ENCODE measurements at regions of chr11 and their contacts with region 1.

Region 1: GRCh38 chr11:47004595-47005033 is 68.1 kb downstream of the CSTPP1 start:
- DNase-seq: peak; percentile 97
- H3K4me3 ChIP-seq: no peak overlapping the region
- H3K27ac ChIP-seq: peak overlapping the region; percentile 64 to 84 (median 78)
- H3K4me1 ChIP-seq: peaks cover 0 to 69% (median 44%) of the 10 kb centered on the region in 4 donors
- H3K27me3 ChIP-seq: no peaks in the 10 kb centered on the region
- CTCF ChIP-seq: no peak
- EP300 ChIP-seq: peak; percentile 50 to 95 (median 92)
- POLR2A ChIP-seq: no peak

Region 2: GRCh38 chr11:46649180-46649738 is 355.4 kb before region 1 on chr11:
- intact Hi-C with region 1: no loop called
- DNase-seq: peak; percentile 88
- H3K4me3 ChIP-seq: no peak overlapping the region
- H3K27ac ChIP-seq: peak overlapping the region; percentile 53 to 75 (median 55)
- H3K4me1 ChIP-seq: peaks cover 0 to 13% (median 3%) of the 10 kb centered on the region in 4 donors
- H3K27me3 ChIP-seq: no peaks in the 10 kb centered on the region
- CTCF ChIP-seq: no peak
- EP300 ChIP-seq: no peak
- POLR2A ChIP-seq: no peak

Region 3: GRCh38 chr11:46916286-46917108 is 88.1 kb before region 1 on chr11:
- intact Hi-C with region 1: loop called (anchors 5 kb)
- DNase-seq: peak; percentile 88
- H3K4me3 ChIP-seq: peak overlapping the region; percentile 47 to 76 (median 60)
- H3K27ac ChIP-seq: peak overlapping the region; percentile 67 to 84 (median 69)
- H3K4me1 ChIP-seq: peaks cover 0 to 76% (median 56%) of the 10 kb centered on the region in 4 donors
- H3K27me3 ChIP-seq: no peaks in the 10 kb centered on the region
- CTCF ChIP-seq: peak in 1 of 4 experiments; percentile 34
- EP300 ChIP-seq: no peak
- POLR2A ChIP-seq: no peak

Region 4: DNA sequence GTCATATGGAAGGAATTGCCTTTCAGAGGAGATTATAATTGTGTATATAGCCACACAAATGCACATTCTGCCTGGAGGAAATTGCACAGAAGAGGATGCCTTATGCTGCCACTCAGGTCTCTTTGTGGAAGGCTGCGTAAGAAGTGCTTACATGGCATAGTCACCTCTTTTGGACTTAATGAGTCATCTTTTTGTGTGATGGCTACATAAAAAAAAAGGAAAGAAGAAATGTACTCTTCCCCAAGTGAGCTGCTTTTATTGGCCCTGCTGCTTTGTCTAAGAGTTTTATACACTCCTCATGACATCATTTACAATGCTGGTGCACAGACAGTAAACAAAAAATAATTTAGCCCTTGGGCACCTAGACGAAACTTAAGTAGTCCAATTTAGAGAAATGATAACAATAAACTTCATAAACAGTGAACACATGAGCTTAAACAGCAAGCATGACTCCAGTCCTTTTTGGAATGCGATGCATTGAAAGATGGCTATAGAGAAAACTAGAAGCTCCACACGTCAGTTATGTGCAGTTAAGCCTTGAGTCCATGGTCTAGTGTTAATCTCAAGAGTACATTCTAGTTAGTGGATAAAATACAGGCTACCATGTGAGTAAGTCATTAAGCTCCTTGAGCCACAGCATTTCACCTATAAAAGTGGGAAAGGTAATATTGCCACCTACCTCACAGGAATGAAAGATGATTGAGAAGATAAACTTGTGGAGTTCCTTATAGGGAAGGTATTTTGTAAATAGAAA is 56.1 kb before region 1 on chr11:
- intact Hi-C with region 1: loop called (anchors 5 kb)
- DNase-seq: no peak
- H3K4me3 ChIP-seq: no peak overlapping the region
- H3K27ac ChIP-seq: peak overlapping the region in 3 of 4 donors; percentile 48 to 75 (median 58)
- H3K4me1 ChIP-seq: peaks cover 0 to 13% (median 5%) of the 10 kb centered on the region in 4 donors
- H3K27me3 ChIP-seq: no peaks in the 10 kb centered on the region
- CTCF ChIP-seq: no peak
- EP300 ChIP-seq: peak in 2 of 4 donors; percentile 32 to 70
- POLR2A ChIP-seq: no peak

Region 5: DNA sequence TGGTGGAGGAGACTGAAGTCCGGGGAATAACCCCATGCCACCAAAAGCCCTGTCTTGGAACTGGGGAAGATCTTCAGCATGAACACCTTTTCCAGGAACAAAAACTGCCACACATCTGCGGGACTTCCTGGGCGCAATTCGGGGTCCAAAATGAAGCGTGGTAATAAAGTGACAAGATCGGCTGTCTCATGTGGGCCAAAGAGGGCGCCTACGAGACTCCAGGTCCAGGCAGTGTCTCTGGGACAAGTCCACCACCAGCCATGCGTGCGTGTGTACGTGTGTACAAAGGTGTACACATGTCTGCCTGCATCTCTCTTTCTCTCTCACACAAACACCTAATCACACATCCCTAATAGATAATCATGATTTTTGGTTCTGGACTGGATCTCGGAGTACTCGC is 356.8 kb after region 1 on chr11:
- intact Hi-C with region 1: no loop called
- DNase-seq: no peak
- H3K4me3 ChIP-seq: no peak overlapping the region
- H3K27ac ChIP-seq: no peak overlapping the region
- H3K4me1 ChIP-seq: no peaks in the 10 kb centered on the region
- H3K27me3 ChIP-seq: no peaks in the 10 kb centered on the region
- CTCF ChIP-seq: no peak
- EP300 ChIP-seq: no peak
- POLR2A ChIP-seq: no peak

Measured in sigmoid colon (tissue), 7 donors.